ENCODE measurements at regions of chr3 and their contacts with region 1.

Region 1: DNA sequence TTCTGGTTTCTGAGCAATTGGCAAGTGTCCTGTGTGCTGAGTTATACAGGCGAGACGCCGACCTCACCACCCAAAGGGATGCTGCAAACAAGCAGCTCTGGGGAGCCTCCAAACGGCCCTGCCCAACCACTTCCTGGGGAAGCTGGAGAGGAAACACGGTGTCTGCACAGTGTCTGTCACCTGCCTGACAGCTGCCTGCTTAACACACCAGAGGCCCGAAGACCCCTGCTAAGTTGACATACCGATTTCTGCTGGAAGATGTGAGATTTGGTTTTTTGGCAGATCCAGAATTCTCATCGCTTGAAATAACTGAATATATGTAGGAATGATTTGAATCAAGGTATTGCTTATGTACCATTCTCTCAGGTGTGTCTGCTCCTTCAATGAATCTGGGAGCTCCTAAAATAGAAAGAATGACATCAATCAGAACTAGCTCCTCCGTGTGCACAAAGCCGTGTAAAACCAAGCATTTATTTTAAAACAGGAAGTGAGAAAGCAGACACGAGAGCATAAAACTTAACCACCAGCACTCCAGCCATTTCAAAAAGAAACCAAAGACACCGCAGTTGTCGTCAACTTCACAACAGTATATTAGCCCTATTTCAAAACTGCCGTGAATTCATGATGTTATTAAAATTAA is 27.2 kb downstream of the LRRC2 start:
- DNase-seq: peak; percentile 70
- ATAC-seq: peak; percentile 86
- H3K4me3 Mint-ChIP-seq: peak overlapping the region; percentile 65
- H3K27ac Mint-ChIP-seq: peak overlapping the region; percentile 90
- H3K4me1 Mint-ChIP-seq: peaks cover 71% of the 10 kb centered on the region
- H3K27me3 Mint-ChIP-seq: peaks cover 2% of the 10 kb centered on the region
- CTCF ChIP-seq: no peak

Region 2: DNA sequence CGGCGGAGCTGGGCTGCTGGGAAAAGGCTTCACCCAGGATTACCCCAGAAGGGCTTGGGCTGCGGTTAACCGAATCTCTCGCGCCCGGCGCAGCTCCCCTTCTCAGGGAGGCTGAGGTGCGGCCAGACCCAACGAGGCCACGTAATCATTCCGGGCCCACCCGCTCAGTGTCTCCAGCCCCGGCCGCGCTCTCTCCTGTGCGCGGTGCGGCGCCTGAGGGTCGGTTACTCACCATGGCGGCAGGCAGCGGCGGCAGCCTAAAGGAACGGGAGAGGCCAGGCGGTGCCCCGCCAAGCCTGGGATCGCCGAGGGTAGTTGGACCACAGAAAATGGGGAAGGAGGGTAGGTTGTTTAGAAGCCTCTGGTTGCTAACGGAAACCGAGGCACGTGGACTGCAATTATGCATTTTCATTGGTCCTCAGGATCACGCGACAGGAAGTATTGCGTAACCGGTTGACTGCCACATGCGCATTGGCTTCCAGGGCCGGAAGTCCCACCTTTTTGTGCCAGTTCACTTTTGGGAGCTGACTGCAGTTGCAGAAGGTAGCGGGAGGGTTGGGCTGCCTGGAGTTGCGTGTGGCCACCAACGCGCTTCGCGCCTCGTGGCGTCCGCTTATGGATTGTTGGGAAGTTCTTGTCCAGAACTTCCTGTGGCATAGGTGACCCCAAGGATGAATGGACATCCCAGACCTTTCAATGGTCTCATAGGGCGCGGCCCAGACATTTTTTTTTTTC is 697.0 kb before region 1 on chr3 and contains the start of gene LZTFL1:
- CTCF ChIA-PET with region 1: no interaction called
- POLR2A ChIA-PET with region 1: no interaction called
- intact Hi-C with region 1: loop called (anchors 10 kb)
- DNase-seq: peak; percentile 80
- ATAC-seq: peak; percentile 88
- H3K4me3 Mint-ChIP-seq: peak within 1 kb of the TSS; percentile 97
- H3K27ac Mint-ChIP-seq: peak within 1 kb of the TSS; percentile 93
- H3K4me1 Mint-ChIP-seq: peaks cover 25% of the 10 kb centered on the region
- H3K27me3 Mint-ChIP-seq: peaks cover 2% of the 10 kb centered on the region
- CTCF ChIP-seq: no peak
- total RNA-seq, gene LZTFL1: 10.8 and 12.6 TPM in 2 replicates

Region 3: GRCh38 chr3:46186471-46187340 is 352.2 kb before region 1 on chr3:
- CTCF ChIA-PET with region 1: no interaction called
- POLR2A ChIA-PET with region 1: interaction called, 7 read pairs
- intact Hi-C with region 1: loop called (anchors 1 kb)
- DNase-seq: no peak
- ATAC-seq: peak; percentile 90
- H3K4me3 Mint-ChIP-seq: peak overlapping the region; percentile 52
- H3K27ac Mint-ChIP-seq: peak overlapping the region; percentile 68
- H3K4me1 Mint-ChIP-seq: peaks cover 58% of the 10 kb centered on the region
- H3K27me3 Mint-ChIP-seq: no peaks in the 10 kb centered on the region
- CTCF ChIP-seq: no peak

Region 4: GRCh38 chr3:46496741-46497554 is 42.0 kb before region 1 on chr3:
- CTCF ChIA-PET with region 1: interaction called, 10 read pairs
- POLR2A ChIA-PET with region 1: interaction called, 4 read pairs
- intact Hi-C with region 1: loop called (anchors 2 kb)
- DNase-seq: no peak
- ATAC-seq: peak; percentile 34
- H3K4me3 Mint-ChIP-seq: no peak overlapping the region
- H3K27ac Mint-ChIP-seq: no peak overlapping the region
- H3K4me1 Mint-ChIP-seq: peaks cover 28% of the 10 kb centered on the region
- H3K27me3 Mint-ChIP-seq: no peaks in the 10 kb centered on the region
- CTCF ChIP-seq: no peak

Region 5: DNA sequence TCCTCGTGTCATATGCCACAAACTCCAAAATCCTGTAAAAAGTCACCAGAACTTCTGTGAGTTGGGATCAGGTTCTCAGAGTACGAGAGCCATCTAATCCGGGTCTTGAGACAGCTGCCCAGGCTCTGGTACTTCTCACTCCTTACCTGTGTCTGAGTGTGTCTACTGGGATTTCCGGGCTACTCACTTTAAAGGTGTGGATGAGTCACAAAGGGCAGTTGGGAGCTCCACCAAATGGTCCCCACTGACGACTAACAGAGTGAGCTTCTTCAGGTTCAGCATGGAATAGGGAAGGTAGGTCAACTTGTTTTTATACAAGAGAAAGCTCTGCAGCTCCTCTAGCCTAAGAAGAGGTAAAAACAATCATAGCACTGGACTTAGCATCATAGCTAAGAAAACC is 11.7 kb before region 1 on chr3:
- CTCF ChIA-PET with region 1: no interaction called
- POLR2A ChIA-PET with region 1: interaction called, 13 read pairs
- intact Hi-C with region 1: no loop called
- DNase-seq: no peak
- ATAC-seq: no peak
- H3K4me3 Mint-ChIP-seq: no peak overlapping the region
- H3K27ac Mint-ChIP-seq: no peak overlapping the region
- H3K4me1 Mint-ChIP-seq: no peaks in the 10 kb centered on the region
- H3K27me3 Mint-ChIP-seq: peaks cover 4% of the 10 kb centered on the region
- CTCF ChIP-seq: no peak

Region 6: GRCh38 chr3:46566036-46566641 is 27.2 kb after region 1 on chr3 and contains the start of gene LRRC2:
- CTCF ChIA-PET with region 1: no interaction called
- POLR2A ChIA-PET with region 1: no interaction called
- intact Hi-C with region 1: no loop called
- DNase-seq: no peak
- ATAC-seq: peak; percentile 45
- H3K4me3 Mint-ChIP-seq: peak within 1 kb of the TSS; percentile 64
- H3K27ac Mint-ChIP-seq: no peak within 1 kb of the TSS
- H3K4me1 Mint-ChIP-seq: peaks cover 11% of the 10 kb centered on the region
- H3K27me3 Mint-ChIP-seq: peaks cover 27% of the 10 kb centered on the region
- CTCF ChIP-seq: no peak
- total RNA-seq, gene LRRC2: not detected in 2 replicates

Region 7: DNA sequence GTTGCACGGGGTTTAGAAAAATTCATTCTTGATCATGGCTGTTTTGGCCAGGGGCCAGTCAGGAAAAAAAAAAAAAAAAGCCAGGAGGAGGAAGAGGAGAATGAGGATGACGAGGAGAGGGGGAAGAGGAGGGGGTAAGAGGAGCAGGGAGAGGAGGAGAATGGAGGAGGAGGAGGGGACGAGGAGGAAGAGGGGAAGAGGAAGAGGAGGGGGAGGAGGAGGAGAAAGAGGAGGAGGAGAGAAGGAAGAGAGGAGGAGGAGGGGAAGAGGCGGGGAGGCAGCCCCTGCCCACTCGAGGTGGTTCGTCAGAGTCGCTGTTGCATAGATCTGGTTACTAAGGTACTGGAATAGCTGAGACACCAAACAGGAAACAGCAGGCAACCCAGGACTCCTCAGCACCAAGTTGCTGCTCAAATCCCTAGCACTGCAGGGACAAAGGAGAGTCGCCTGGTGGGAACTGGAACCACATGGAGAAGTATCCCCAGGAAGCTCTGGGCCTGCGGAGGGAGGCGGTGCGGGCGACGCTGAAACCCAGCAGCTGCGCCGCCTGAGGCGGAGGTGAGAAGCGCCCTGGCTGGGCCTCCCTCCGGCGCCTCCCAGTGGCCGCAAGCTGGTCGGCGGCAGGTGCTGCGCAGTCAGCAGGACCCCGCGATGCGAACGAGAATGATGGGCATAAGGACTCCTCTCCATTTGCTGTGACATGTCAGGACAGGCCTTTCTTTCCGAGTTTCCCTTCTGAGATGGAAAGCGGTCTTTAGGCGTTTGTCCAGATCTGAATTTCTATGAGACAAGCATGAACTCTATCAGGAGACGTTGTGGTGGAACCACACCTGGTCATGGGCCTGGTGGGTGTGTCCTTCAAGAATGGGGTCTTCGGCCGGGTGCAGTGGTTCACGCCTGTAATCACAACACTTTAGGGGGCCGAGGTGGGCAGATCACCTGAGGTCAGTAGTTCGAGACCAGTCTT is 90.9 kb after region 1 on chr3:
- CTCF ChIA-PET with region 1: interaction called, 10 read pairs
- POLR2A ChIA-PET with region 1: interaction called, 7 read pairs
- intact Hi-C with region 1: no loop called
- DNase-seq: peak; percentile 73
- ATAC-seq: peak; percentile 98
- H3K4me3 Mint-ChIP-seq: peak overlapping the region; percentile 65
- H3K27ac Mint-ChIP-seq: peak overlapping the region; percentile 56
- H3K4me1 Mint-ChIP-seq: peaks cover 17% of the 10 kb centered on the region
- H3K27me3 Mint-ChIP-seq: peaks cover 2% of the 10 kb centered on the region
- CTCF ChIP-seq: peak; percentile 74

Region 8: GRCh38 chr3:46909535-46910442 is 370.9 kb after region 1 on chr3:
- CTCF ChIA-PET with region 1: no interaction called
- POLR2A ChIA-PET with region 1: no interaction called
- intact Hi-C with region 1: no loop called
- DNase-seq: peak; percentile 68
- ATAC-seq: peak; percentile 91
- H3K4me3 Mint-ChIP-seq: no peak overlapping the region
- H3K27ac Mint-ChIP-seq: no peak overlapping the region
- H3K4me1 Mint-ChIP-seq: peaks cover 7% of the 10 kb centered on the region
- H3K27me3 Mint-ChIP-seq: no peaks in the 10 kb centered on the region
- CTCF ChIP-seq: peak; percentile 44

Measured in activated B cell treated with CpG ODN at 0.5 μM for 24 hours (primary cell).